Mucosa of descending colon (tissue), 3 donors: ENCODE measurements at regions of chr2 and their contacts with region 1.

Region 1: GRCh38 chr2:47767880-47768609 is 14.9 kb upstream of the MSH6 start:
- DNase-seq: peak; percentile 70 to 79 (median 76)
- ATAC-seq: peak; percentile 93
- H3K4me3 ChIP-seq: no peak overlapping the region
- H3K4me1 ChIP-seq: no peaks in the 10 kb centered on the region
- CTCF ChIP-seq: peak; percentile 95

Region 2: GRCh38 chr2:47437287-47437686 is 330.8 kb before region 1 on chr2:
- intact Hi-C with region 1: loop called in 1 of 2 experiments (anchors 10 kb)
- DNase-seq: peak in 1 of 3 donors; percentile 8
- ATAC-seq: no peak
- H3K4me3 ChIP-seq: no peak overlapping the region
- H3K4me1 ChIP-seq: no peaks in the 10 kb centered on the region
- CTCF ChIP-seq: no peak

Region 3: DNA sequence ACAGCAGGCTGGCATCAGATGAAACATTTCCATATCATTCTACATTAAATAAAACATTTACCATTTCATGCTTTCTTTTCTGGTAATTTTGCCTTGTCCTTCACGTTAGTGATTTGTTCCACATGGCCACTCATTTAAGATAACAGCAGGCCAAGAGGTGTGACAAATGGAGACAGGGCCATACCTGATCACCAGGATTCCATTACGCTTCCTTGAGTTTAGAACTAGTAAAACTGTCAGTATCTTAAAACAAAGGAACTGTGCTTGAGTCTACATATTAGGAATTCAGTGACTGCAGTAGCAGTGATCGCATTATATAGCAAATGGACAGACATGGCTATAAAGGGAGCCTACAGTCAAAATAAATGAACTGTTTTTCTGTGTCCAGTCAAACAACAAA is 1541.4 kb after region 1 on chr2:
- intact Hi-C with region 1: no loop called
- DNase-seq: no peak
- ATAC-seq: no peak
- H3K4me3 ChIP-seq: no peak overlapping the region
- H3K4me1 ChIP-seq: no peaks in the 10 kb centered on the region
- CTCF ChIP-seq: no peak